Esophagus muscularis mucosa (tissue), 4 donors: ENCODE measurements at regions of chr19 and their contacts with region 1.

Region 1: DNA sequence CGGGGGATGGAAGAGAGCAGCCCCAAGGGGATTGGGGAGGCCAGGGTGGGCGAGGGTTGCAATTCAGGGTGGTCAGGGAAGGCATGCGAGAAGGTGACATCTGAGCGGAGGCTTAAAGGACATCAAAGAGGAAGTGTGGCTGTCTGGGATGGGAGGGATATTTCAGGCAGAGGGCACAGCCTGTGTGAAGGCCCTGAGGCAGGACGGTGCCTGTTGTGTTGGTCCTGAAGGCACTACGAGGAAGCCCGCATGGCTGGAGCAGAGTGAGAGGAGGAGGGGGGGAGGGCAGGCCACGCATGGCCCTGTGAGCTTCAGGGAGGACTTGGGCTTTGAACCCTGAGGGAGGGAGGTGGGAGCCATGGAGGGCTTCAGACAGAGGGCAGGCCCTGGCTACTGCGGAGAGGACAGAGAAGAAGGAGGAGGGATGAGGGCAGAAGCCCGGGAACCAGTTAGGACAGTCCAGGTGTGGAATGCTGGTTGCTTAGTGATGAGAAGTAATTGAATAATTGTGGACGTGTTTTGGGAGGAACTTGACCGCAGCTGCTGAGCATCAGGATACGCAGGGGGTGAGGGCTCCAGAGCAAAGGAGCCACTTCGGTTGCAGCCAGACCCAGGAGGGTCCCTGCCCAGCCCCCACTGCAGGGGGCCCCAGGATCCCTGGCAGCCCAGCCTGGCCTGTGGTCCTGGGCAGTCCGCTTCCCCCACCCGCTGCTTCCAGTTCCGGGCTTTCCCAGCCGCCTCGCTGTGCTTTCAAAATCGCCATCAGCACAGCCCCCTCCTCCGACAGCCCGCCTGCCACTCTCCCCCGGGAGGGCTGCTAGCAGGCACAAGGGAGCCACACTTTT is 6.2 kb downstream of the TLE6 start:
- DNase-seq: no peak
- H3K4me3 ChIP-seq: peak overlapping the region; percentile 44 to 60 (median 49)
- H3K27ac ChIP-seq: peak overlapping the region; percentile 85 to 92 (median 90)
- H3K4me1 ChIP-seq: peaks cover 33 to 40% (median 34%) of the 10 kb centered on the region in 4 donors
- H3K27me3 ChIP-seq: no peaks in the 10 kb centered on the region
- CTCF ChIP-seq: no peak
- EP300 ChIP-seq: no peak
- POLR2A ChIP-seq: no peak

Region 2: DNA sequence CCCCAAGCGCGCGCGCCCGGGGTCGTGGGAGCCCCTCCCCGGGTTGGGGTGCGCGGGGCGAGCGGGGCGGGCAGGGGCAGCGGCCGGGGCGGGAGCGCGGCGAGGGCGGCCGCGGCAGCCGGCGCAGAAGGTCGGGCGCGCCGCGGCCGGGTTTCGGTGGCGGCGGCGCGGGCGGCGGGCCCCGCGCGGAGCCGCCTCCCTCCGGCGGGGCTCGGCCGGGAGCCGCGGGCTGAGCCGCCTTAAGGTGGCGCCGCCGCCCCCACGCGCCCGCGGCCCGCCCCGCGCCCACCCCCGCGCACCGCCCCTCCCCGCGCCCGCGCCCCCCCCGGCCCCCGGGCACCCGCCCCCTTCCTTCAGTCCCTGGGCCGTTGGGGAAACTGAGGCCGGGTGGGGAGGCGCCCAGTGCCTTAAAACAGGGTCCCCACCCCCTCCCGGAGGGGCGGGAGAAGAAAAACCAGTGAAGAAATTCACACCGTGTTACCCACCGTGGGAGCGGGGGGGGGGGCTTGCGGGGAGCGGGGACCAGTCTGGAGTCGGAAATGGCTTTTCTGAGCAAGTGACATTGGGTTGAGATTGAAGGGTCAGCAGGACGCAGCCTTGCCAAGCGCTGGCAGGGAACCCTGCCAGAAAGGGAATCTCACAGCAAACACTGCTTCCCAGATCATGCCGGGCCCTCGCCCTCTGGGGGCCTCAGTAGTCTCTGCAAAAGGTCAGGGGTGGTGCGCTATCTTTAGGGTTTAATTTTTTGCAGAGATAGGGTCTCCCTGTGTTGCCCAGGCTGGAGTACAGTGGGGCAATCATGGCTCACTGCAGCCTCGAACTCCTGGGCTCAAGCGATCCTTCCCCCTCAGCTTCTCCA is 45.7 kb after region 1 on chr19 and contains the start of gene TLE2:
- intact Hi-C with region 1: loop called (anchors 5 kb)
- DNase-seq: no peak
- H3K4me3 ChIP-seq: peak within 1 kb of the TSS; percentile 73 to 81 (median 74)
- H3K27ac ChIP-seq: peak within 1 kb of the TSS; percentile 62 to 76 (median 70)
- H3K4me1 ChIP-seq: peaks cover 11 to 29% (median 22%) of the 10 kb centered on the region in 4 donors
- H3K27me3 ChIP-seq: no peaks in the 10 kb centered on the region
- CTCF ChIP-seq: no peak
- EP300 ChIP-seq: no peak
- POLR2A ChIP-seq: no peak
- total RNA-seq, gene TLE2: 34.0 to 51.2 (median 44.1) TPM